Activated CD8-positive, alpha-beta T cell treated with anti-CD3 and anti-CD28 coated beads, Interleukin-2, amount 10 ng/mL, durations not matched to agents 7 days and 5 days (primary cell): ENCODE measurements at regions of chr10 and their contacts with region 1.

Region 1: DNA sequence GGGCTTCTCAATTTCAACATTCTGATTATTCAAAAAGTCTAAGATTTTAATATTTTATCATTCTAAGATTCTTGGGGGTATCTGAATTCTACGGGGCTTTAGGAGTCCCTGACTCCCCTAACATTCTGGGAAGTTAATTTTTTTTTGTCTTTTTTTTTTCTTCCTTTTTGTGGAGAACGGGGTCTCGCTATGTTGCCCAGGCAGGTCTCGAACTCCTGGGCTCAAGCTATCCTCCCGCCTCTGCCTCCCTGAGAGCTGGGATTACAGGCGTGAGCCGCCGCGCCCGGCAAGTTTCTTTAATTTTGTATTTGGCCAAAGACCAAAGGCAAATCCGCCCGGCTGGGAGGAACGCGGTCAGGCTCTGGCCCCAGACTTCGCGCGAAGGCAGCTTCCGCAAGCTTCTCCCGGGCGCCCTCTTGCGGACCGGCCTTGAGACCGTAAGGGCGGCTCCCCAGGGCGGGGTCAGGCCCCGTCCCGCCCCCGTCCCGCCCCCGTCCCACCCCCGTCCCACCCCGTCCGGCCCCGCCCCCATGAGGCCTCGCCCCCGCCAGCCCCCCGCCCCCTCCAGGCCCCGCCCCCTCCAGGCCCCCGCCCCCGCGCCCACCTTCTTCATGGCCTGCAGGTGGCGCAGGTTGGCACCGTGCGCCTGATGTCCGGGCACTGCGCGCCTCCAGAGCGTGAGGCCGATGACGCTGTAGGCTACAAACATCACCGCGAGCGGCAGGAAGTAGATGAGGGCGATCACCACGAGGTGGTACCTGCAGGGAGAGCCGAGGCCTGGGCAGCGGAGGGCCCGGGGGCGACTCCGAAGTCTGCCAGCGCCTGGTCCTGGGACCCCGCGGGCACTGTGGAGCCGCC is 8.2 kb downstream of the TACR2 start:
- DNase-seq: peak; percentile 93
- ATAC-seq: peak; percentile 92
- H3K4me3 Mint-ChIP-seq: peak overlapping the region; percentile 71
- H3K27ac Mint-ChIP-seq: peak overlapping the region; percentile 90
- H3K4me1 Mint-ChIP-seq: peaks cover 34% of the 10 kb centered on the region
- H3K27me3 Mint-ChIP-seq: no peaks in the 10 kb centered on the region

Region 2: GRCh38 chr10:69229622-69229928 is 179.0 kb before region 1 on chr10:
- CTCF ChIA-PET with region 1: interaction called, 15 read pairs
- POLR2A ChIA-PET with region 1: interaction called, 3 read pairs
- DNase-seq: no peak
- ATAC-seq: no peak
- H3K4me3 Mint-ChIP-seq: peak overlapping the region; percentile 80
- H3K27ac Mint-ChIP-seq: peak overlapping the region; percentile 98
- H3K4me1 Mint-ChIP-seq: peaks cover 86% of the 10 kb centered on the region
- H3K27me3 Mint-ChIP-seq: no peaks in the 10 kb centered on the region

Region 3: DNA sequence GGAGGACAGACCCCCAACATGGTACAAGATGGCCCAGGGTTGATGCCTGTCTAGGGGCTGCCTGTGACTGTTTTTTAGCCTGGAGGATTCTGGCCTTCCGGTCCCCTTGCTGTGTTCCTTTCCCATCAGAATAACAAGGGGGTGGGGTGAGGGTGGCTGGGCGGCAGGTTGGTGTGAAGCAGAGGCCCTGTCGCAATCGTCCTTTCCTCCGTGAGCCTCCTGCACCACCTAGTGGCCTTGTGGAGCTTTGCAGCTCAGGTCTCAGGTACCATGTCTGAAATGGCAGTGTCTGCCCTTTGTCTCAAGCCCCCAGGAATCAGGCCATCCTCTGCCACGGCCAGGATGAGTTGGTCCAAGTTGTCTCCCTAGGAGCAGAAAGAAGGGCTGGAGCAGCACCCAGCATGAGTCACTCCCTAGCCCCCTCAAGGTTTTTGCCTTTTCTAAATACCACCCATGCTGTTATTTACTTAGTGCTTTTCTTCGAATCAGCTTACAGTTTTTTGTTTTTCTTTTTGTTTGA is 16.0 kb before region 1 on chr10:
- CTCF ChIA-PET with region 1: interaction called, 25 read pairs
- POLR2A ChIA-PET with region 1: interaction called, 3 read pairs
- DNase-seq: peak; percentile 90
- ATAC-seq: peak; percentile 92
- H3K4me3 Mint-ChIP-seq: no peak overlapping the region
- H3K27ac Mint-ChIP-seq: peak overlapping the region; percentile 71
- H3K4me1 Mint-ChIP-seq: peaks cover 29% of the 10 kb centered on the region
- H3K27me3 Mint-ChIP-seq: no peaks in the 10 kb centered on the region

Region 4: GRCh38 chr10:69425511-69426298 is 17.2 kb after region 1 on chr10:
- CTCF ChIA-PET with region 1: interaction called, 18 read pairs
- POLR2A ChIA-PET with region 1: no interaction called
- DNase-seq: peak; percentile 52
- ATAC-seq: peak; percentile 69
- H3K4me3 Mint-ChIP-seq: no peak overlapping the region
- H3K27ac Mint-ChIP-seq: peak overlapping the region; percentile 79
- H3K4me1 Mint-ChIP-seq: peaks cover 56% of the 10 kb centered on the region
- H3K27me3 Mint-ChIP-seq: peaks cover 5% of the 10 kb centered on the region

Region 5: GRCh38 chr10:69451209-69451783 is 42.7 kb after region 1 on chr10 and contains the start of gene TSPAN15:
- CTCF ChIA-PET with region 1: interaction called, 14 read pairs
- POLR2A ChIA-PET with region 1: interaction called, 3 read pairs
- DNase-seq: peak; percentile 81
- ATAC-seq: peak; percentile 97
- H3K4me3 Mint-ChIP-seq: peak within 1 kb of the TSS; percentile 85
- H3K27ac Mint-ChIP-seq: no peak within 1 kb of the TSS
- H3K4me1 Mint-ChIP-seq: peaks cover 29% of the 10 kb centered on the region
- H3K27me3 Mint-ChIP-seq: peaks cover 26% of the 10 kb centered on the region
- total RNA-seq, gene TSPAN15: 3.8 to 4.7 TPM

Region 6: DNA sequence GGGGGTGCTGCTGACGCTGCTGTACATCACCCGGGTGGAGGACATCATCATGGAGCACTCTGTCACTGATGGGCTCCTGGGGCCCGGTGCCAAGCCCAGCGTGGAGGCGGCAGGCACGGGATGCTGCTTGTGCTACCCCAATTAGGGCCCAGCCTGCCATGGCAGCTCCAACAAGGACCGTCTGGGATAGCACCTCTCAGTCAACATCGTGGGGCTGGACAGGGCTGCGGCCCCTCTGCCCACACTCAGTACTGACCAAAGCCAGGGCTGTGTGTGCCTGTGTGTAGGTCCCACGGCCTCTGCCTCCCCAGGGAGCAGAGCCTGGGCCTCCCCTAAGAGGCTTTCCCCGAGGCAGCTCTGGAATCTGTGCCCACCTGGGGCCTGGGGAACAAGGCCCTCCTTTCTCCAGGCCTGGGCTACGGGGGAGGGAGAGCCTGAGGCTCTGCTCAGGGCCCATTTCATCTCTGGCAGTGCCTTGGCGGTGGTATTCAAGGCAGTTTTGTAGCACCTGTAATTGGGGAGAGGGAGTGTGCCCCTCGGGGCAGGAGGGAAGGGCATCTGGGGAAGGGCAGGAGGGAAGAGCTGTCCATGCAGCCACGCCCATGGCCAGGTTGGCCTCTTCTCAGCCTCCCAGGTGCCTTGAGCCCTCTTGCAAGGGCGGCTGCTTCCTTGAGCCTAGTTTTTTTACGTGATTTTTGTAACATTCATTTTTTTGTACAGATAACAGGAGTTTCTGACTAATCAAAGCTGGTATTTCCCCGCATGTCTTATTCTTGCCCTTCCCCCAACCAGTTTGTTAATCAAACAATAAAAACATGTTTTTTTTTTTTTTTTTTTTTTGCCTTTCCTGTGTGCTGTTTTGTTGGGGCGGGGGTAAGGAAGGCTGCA is 98.5 kb after region 1 on chr10:
- CTCF ChIA-PET with region 1: interaction called, 28 read pairs
- POLR2A ChIA-PET with region 1: interaction called, 3 read pairs
- DNase-seq: no peak
- ATAC-seq: no peak
- H3K4me3 Mint-ChIP-seq: no peak overlapping the region
- H3K27ac Mint-ChIP-seq: peak overlapping the region; percentile 68
- H3K4me1 Mint-ChIP-seq: peaks cover 13% of the 10 kb centered on the region
- H3K27me3 Mint-ChIP-seq: peaks cover 20% of the 10 kb centered on the region